Mammary epithelial cell (primary cell): ENCODE measurements at regions of chr12 and their contacts with region 1.

Region 1: DNA sequence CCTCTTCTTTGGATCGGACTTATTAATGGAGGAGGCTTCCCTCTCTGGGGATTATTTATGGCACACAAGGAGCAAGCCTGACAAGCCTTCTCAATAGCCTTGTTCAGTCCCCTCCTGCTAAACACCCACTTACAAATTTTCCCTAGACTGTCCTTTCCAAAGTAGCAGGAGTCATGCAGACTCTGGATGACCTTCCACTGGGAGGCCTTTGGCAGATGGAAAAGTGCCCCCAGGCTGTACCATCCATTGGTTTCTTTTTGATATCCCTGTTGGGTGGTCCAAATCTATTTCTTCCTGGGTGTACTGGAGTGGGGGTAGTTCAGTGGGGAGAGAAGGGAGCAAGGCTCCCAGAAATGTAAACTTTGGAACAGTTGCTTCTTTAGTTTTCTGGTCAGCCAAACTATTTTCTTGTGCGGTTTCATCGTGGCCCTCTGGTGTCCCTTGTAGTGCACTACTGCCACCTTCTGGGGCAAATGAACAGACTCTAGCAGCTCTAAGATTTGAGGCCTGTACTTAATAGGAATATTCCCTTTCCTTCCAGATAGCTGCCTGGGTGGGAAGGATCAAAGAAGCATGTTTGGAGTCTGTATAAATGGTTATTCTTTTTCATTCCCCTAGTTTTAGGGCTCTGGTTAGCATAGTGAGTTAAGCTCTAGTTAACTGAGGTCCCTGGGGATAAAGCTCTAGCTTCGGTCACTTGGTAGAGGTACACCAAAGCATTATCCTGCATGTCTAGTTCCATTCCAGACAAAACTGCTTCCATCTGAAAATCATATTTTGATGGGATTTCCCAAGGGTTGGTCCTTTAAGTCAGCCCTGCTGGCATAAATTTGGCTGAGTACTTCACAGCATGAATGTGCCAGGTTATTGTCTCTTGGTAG is 409.5 kb downstream of the SLC6A15 start:
- DNase-seq: peak; percentile 66
- H3K4me3 ChIP-seq: no peak overlapping the region
- H3K27ac ChIP-seq: peak overlapping the region; percentile 10
- H3K4me1 ChIP-seq: peaks cover 19% of the 10 kb centered on the region
- H3K27me3 ChIP-seq: no peaks in the 10 kb centered on the region
- CTCF ChIP-seq: peak; percentile 56 to 59

Region 2: GRCh38 chr12:83462419-83462818 is 1040.7 kb before region 1 on chr12:
- CTCF ChIA-PET with region 1: no interaction called
- dilution Hi-C with region 1: no loop called
- in situ Hi-C with region 1: no loop called
- intact Hi-C with region 1: loop called (anchors 10 kb)
- DNase-seq: no peak
- H3K4me3 ChIP-seq: no peak overlapping the region
- H3K27ac ChIP-seq: no peak overlapping the region
- H3K4me1 ChIP-seq: no peaks in the 10 kb centered on the region
- H3K27me3 ChIP-seq: no peaks in the 10 kb centered on the region
- CTCF ChIP-seq: no peak

Region 3: DNA sequence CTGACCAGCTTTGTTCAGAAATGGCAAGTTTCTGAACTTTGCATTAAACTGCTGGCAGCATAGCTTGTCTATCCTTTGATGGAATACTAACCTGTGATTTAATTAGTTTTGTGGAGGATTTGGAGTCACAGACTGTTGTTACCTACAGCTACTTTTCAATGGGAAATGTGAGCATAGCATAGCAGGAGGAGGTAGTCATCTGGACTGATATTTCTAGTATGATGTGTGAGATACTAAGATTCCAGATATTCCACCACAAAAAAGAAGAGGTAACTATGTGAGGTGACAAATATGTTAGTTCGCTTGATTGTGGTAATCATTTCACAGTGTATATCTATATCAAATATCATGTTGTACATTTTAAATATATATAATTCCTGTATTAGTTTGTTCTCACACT is 423.5 kb before region 1 on chr12:
- CTCF ChIA-PET with region 1: no interaction called
- dilution Hi-C with region 1: no loop called
- in situ Hi-C with region 1: no loop called
- intact Hi-C with region 1: loop called (anchors 10 kb)
- DNase-seq: no peak
- H3K4me3 ChIP-seq: no peak overlapping the region
- H3K27ac ChIP-seq: no peak overlapping the region
- H3K4me1 ChIP-seq: no peaks in the 10 kb centered on the region
- H3K27me3 ChIP-seq: no peaks in the 10 kb centered on the region
- CTCF ChIP-seq: no peak

Region 4: GRCh38 chr12:84537666-84538065 is 34.5 kb after region 1 on chr12:
- CTCF ChIA-PET with region 1: no interaction called
- dilution Hi-C with region 1: no loop called
- in situ Hi-C with region 1: no loop called
- intact Hi-C with region 1: no loop called
- DNase-seq: no peak
- H3K4me3 ChIP-seq: no peak overlapping the region
- H3K27ac ChIP-seq: no peak overlapping the region
- H3K4me1 ChIP-seq: no peaks in the 10 kb centered on the region
- H3K27me3 ChIP-seq: no peaks in the 10 kb centered on the region
- CTCF ChIP-seq: no peak

Region 5: GRCh38 chr12:84619113-84619512 is 116.0 kb after region 1 on chr12:
- CTCF ChIA-PET with region 1: no interaction called
- dilution Hi-C with region 1: no loop called
- in situ Hi-C with region 1: no loop called
- intact Hi-C with region 1: loop called (anchors 10 kb)
- DNase-seq: no peak
- H3K4me3 ChIP-seq: no peak overlapping the region
- H3K27ac ChIP-seq: no peak overlapping the region
- H3K4me1 ChIP-seq: no peaks in the 10 kb centered on the region
- H3K27me3 ChIP-seq: no peaks in the 10 kb centered on the region
- CTCF ChIP-seq: peak; percentile 17 to 51

Region 6: DNA sequence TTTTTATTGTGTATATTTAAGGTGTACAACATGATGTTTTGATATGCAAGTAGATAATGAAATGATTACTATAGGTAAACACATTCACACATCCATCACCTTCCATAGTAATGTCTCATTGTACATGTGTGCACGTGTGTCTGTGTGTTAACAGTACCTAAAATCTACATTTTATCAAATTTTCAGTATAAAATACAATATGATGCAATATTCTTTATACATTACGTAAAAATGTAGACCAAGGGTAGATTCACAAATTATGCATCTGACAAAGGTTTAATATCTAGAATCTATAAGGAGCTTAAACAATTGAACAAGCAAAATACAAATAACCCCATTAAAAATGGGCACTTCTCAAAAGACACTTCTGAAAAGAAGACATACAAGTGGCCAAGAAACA is 1972.8 kb after region 1 on chr12:
- CTCF ChIA-PET with region 1: no interaction called
- dilution Hi-C with region 1: no loop called
- in situ Hi-C with region 1: no loop called
- intact Hi-C with region 1: no loop called
- DNase-seq: no peak
- H3K4me3 ChIP-seq: no peak overlapping the region
- H3K27ac ChIP-seq: no peak overlapping the region
- H3K4me1 ChIP-seq: no peaks in the 10 kb centered on the region
- H3K27me3 ChIP-seq: no peaks in the 10 kb centered on the region
- CTCF ChIP-seq: no peak